ENCODE measurements at regions of chr7 and their contacts with region 1.

Region 1: GRCh38 chr7:124992766-124993562 is 63.3 kb upstream of the POT1 start:
- DNase-seq: peak; percentile 47
- H3K4me3 Mint-ChIP-seq: peak overlapping the region; percentile 54
- H3K27ac Mint-ChIP-seq: peak overlapping the region; percentile 98
- H3K4me1 Mint-ChIP-seq: peaks cover 19% of the 10 kb centered on the region
- H3K27me3 Mint-ChIP-seq: no peaks in the 10 kb centered on the region
- CTCF ChIP-seq: no peak

Region 2: DNA sequence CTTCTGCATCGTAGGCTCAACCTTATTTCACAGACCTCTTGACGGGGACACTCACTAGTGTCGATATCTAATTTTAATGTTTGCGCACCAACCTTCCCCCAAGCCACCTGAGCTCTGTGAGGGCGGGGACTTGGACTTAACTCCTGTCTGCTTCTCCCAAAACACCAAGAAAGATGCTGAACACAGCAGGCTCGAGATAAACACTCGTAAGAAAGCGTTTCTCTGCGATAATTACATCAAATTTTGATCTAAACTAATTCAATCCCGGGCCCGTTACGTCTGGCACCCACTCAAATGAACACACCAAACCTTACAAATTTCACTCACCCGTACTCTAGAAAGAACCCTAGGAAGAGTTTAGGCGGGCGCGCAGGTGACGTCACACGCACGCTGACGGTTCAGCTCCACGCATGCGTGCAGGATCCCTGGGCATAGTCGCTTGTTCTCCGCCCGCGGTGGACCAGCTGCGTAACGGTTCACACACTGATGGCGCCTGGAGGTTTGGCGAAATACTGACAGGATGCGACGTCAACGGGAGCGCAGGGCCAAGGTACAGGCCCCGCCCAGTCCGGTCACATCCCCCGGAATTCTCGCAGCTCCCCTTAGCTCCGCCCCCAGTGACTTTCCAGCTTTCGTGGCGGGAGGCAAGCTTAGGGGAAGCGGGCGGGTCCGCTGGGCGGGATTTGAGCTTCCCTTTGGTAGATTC is 63.3 kb before region 1 on chr7 and contains the start of gene POT1:
- CTCF ChIA-PET with region 1: interaction called, 6 read pairs
- intact Hi-C with region 1: loop called (anchors 2 kb)
- DNase-seq: peak; percentile 97
- H3K4me3 Mint-ChIP-seq: peak within 1 kb of the TSS; percentile 97
- H3K27ac Mint-ChIP-seq: peak within 1 kb of the TSS; percentile 97
- H3K4me1 Mint-ChIP-seq: peaks cover 13% of the 10 kb centered on the region
- H3K27me3 Mint-ChIP-seq: no peaks in the 10 kb centered on the region
- CTCF ChIP-seq: no peak
- total RNA-seq, gene POT1: 31.1 and 31.6 TPM in 2 replicates

Measured in Calu3 (cell line).